AG04450 (cell line): ENCODE measurements at regions of chr17 and their contacts with region 1.

Region 1: DNA sequence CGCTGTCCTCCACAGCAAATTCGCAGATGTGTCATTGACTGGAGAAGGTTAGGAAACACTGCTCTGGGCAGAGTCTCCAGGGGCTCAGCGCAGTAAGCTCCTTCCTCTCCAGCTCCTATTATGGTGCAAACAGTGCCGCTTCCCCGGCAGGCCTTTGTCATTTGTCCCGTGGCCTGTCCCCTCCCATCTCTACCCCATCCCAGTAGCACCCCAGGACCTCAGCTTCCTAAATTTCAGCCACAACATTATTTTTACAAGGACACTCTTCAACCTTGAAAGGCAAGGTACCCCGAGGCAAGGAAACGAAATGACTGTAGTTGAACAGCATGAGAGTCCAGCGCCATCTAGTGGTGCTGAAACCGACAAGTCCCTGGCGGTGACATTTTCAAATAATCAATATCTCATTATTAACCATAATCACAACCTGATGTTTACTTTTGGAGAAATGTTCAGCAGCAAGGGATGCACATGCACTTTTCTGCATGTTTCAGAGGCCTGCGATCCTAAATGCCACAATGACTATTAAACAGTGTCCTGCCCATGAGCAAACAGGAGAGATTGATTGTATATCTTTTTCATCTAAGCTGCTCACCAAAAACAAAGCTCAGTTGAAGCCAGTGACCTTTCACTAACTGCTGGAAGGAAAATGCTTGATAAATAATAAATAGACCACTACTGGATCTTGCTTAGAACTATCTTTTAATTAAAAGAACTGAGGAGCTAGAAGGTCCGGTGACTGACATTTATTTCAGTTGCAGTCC is 16.5 kb downstream of the MRPS23 start:
- DNase-seq: peak; percentile 30
- H3K4me3 ChIP-seq: peak overlapping the region; percentile 59
- H3K27ac ChIP-seq: no peak overlapping the region
- H3K27me3 ChIP-seq: no peaks in the 10 kb centered on the region
- CTCF ChIP-seq: peak; percentile 94

Region 2: DNA sequence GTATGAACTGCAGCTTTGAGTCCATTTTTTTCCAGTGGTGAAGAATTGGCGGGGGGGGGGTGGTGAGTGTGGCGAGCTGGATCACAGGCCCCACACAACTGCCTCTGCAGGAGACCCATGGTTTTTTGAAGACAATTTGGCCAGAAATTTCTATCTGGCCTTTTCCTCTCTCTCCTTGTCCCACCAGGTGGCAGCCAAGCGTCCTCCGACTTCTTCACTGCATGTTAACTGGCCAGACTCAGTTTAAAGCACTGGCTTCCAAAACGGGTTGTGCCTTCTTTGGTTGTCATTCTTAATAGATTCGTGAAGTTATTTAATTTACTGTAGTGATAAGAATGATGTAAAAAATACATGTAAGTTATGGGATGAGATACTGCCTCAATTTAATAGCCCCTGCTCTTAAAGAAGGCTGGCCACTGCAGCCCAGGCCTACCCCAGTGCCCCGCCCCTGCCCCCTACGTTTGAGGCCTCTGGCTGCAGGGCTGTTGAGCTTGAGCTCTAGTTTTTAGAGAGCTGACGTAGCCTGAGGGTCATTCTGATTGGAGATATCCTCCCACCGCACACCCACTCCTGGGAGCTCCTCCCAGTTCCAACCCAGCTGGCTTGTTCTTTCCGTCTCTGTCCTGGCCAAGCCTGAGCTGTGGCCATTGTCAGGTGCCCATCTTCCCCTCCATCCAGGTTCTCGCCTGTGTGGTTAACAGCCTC is 711.9 kb before region 1 on chr17:
- CTCF ChIA-PET with region 1: interaction called, 39 read pairs
- POLR2A ChIA-PET with region 1: no interaction called
- DNase-seq: no peak
- H3K4me3 ChIP-seq: no peak overlapping the region
- H3K27ac ChIP-seq: no peak overlapping the region
- H3K27me3 ChIP-seq: no peaks in the 10 kb centered on the region
- CTCF ChIP-seq: peak; percentile 77

Region 3: DNA sequence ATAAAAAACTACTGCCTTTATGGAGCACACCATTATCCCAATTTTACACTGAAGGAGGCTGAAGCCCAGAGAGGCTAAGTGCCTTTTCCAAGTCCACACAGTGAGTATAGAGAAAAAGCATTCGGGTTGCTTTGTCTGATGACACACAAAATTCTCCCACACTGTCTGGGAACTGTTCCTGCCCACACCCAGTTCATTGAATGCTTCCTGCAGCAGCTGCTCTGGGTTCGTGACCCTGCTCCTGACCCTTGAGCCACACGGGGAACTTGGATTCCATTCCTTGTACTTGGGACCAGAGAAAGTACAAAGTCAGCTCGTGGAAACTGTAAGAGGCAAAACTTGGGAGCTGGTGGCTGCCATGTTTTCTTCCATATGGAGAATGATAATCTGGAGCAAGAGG is 690.4 kb before region 1 on chr17:
- CTCF ChIA-PET with region 1: interaction called, 10 read pairs
- POLR2A ChIA-PET with region 1: no interaction called
- DNase-seq: no peak
- H3K4me3 ChIP-seq: no peak overlapping the region
- H3K27ac ChIP-seq: no peak overlapping the region
- H3K27me3 ChIP-seq: peaks cover 5% of the 10 kb centered on the region
- CTCF ChIP-seq: no peak

Region 4: GRCh38 chr17:57671667-57672632 is 161.4 kb before region 1 on chr17:
- CTCF ChIA-PET with region 1: interaction called, 20 read pairs
- POLR2A ChIA-PET with region 1: no interaction called
- DNase-seq: peak; percentile 34
- H3K4me3 ChIP-seq: no peak overlapping the region
- H3K27ac ChIP-seq: no peak overlapping the region
- H3K27me3 ChIP-seq: no peaks in the 10 kb centered on the region
- CTCF ChIP-seq: peak; percentile 98

Region 5: DNA sequence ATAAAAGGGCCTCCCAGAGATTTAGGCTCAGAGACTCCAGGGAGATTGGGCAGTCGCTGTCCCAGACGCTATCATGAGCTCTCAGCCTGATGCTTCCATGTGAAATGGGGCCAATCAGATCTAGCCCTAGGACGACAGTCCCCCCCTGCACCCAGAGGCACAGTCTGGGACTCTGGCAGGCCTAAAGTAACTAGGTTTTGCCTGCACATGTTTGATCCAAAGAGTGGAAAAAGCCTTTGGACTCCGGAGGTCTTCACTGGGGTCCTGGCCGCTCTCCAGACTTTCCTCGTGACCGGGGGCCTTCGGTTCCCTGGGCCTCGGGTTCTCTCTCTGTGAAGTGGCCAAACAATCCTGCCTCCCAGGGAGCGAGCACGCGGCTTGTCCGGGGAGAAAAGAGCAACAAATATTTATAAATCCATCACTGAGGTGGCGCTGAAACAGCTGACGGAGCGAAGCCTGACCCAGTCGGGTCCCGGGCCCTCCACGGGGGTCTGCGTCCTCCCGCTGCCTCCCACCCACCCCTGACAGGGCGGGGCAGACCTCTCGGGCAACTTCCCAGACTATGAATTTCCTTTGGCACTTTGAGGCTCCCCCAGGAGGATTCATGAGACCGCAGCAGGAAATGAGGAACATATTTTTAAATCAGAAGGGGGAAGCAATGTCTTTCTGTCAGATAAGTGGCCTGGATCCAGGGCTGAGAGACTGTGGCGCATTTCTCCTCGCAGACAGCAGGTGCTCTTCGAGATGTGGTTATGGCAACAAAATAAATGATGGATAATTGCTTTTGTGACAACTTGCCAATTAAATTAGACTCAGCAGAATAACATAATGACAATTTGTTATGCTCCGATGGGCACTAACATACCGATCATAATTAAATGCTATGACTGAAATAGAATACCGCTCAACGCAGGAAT is 22.4 kb before region 1 on chr17:
- CTCF ChIA-PET with region 1: interaction called, 22 read pairs
- POLR2A ChIA-PET with region 1: no interaction called
- DNase-seq: no peak
- H3K4me3 ChIP-seq: no peak overlapping the region
- H3K27ac ChIP-seq: no peak overlapping the region
- H3K27me3 ChIP-seq: peaks cover 21% of the 10 kb centered on the region
- CTCF ChIP-seq: no peak

Region 6: GRCh38 chr17:57849874-57850754 is 16.8 kb after region 1 on chr17 and contains the start of gene MRPS23:
- CTCF ChIA-PET with region 1: interaction called, 48 read pairs
- POLR2A ChIA-PET with region 1: interaction called, 3 read pairs
- DNase-seq: peak; percentile 97
- H3K4me3 ChIP-seq: peak within 1 kb of the TSS; percentile 99
- H3K27ac ChIP-seq: peak within 1 kb of the TSS; percentile 85
- H3K27me3 ChIP-seq: no peaks in the 10 kb centered on the region
- CTCF ChIP-seq: no peak
- polyA plus RNA-seq, gene MRPS23: 27.5 and 34.1 TPM in 2 replicates

Region 7: DNA sequence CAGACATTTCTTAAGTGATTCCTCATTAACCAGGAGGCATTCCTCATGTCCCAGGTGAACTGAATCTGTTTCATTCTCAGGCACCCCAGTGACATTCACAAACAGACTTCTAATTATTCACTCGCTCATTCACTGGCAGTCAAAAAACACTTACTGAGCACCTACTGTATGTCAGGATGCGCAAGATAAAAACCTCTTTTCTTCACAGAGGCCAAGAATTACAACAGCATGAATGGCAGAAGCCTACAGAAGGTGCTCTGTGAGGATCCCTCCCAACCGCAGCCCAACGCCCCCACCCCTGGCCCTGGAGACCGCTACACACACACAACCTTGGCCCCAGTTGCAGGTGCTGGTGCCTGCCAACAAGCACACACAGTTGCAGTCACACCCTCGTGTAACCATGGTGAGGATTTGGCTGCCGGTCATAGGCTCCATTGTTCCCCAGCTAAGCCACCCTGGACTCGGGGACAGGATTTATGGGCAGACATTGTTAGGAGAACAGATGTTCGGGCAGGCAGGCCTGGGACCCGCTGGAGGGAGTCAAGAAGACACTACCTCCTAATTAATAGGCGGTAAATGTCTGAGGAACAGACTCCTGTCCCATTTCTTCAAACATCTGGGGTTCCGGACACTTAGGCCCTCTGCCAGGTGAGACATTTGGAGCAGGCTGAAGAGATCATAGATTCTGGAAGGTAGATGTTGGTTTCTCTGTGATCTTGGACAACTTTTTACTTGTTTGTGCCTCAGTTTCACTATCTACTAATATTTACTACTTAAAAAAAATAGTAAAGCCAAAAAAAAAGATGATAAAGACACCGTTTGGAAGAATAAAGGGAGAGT is 78.7 kb after region 1 on chr17:
- CTCF ChIA-PET with region 1: no interaction called
- POLR2A ChIA-PET with region 1: no interaction called
- DNase-seq: no peak
- H3K4me3 ChIP-seq: no peak overlapping the region
- H3K27ac ChIP-seq: no peak overlapping the region
- H3K27me3 ChIP-seq: no peaks in the 10 kb centered on the region
- CTCF ChIP-seq: no peak

Region 8: GRCh38 chr17:58006924-58007780 is 173.8 kb after region 1 on chr17 and contains the start of gene SRSF1:
- CTCF ChIA-PET with region 1: interaction called, 48 read pairs
- POLR2A ChIA-PET with region 1: no interaction called
- DNase-seq: peak; percentile 94
- H3K4me3 ChIP-seq: peak within 1 kb of the TSS; percentile 99
- H3K27ac ChIP-seq: peak within 1 kb of the TSS; percentile 96
- H3K27me3 ChIP-seq: no peaks in the 10 kb centered on the region
- CTCF ChIP-seq: no peak
- polyA plus RNA-seq, gene SRSF1: 215 and 249 TPM in 2 replicates

Region 9: GRCh38 chr17:59074494-59074893 is 1241.1 kb after region 1 on chr17:
- CTCF ChIA-PET with region 1: no interaction called
- POLR2A ChIA-PET with region 1: no interaction called
- DNase-seq: peak; percentile 4
- H3K4me3 ChIP-seq: no peak overlapping the region
- H3K27ac ChIP-seq: no peak overlapping the region
- H3K27me3 ChIP-seq: no peaks in the 10 kb centered on the region
- CTCF ChIP-seq: no peak